ENCODE measurements at regions of chr4 and their contacts with region 1.

Region 1: GRCh38 chr4:1792832-1793495 is at the start of gene FGFR3:
- DNase-seq: peak; percentile 55
- ATAC-seq: peak; percentile 82
- H3K4me3 Mint-ChIP-seq: no peak within 1 kb of the TSS
- H3K27ac Mint-ChIP-seq: no peak within 1 kb of the TSS
- H3K4me1 Mint-ChIP-seq: no peaks in the 10 kb centered on the region
- H3K27me3 Mint-ChIP-seq: peaks cover 10% of the 10 kb centered on the region
- total RNA-seq, gene FGFR3: 0.11 TPM in 1 of 2 experiments, not detected in the other

Region 2: GRCh38 chr4:1207603-1208265 is 585.2 kb before region 1 on chr4:
- CTCF ChIA-PET with region 1: no interaction called
- POLR2A ChIA-PET with region 1: no interaction called
- intact Hi-C with region 1: no loop called
- DNase-seq: peak; percentile 3
- ATAC-seq: no peak
- H3K4me3 Mint-ChIP-seq: no peak overlapping the region
- H3K27ac Mint-ChIP-seq: no peak overlapping the region
- H3K4me1 Mint-ChIP-seq: peaks cover 18% of the 10 kb centered on the region
- H3K27me3 Mint-ChIP-seq: no peaks in the 10 kb centered on the region

Region 3: GRCh38 chr4:1356181-1356998 is 436.6 kb before region 1 on chr4:
- CTCF ChIA-PET with region 1: no interaction called
- POLR2A ChIA-PET with region 1: no interaction called
- intact Hi-C with region 1: no loop called
- DNase-seq: peak; percentile 70
- ATAC-seq: no peak
- H3K4me3 Mint-ChIP-seq: no peak overlapping the region
- H3K27ac Mint-ChIP-seq: no peak overlapping the region
- H3K4me1 Mint-ChIP-seq: peaks cover 7% of the 10 kb centered on the region
- H3K27me3 Mint-ChIP-seq: no peaks in the 10 kb centered on the region

Region 4: DNA sequence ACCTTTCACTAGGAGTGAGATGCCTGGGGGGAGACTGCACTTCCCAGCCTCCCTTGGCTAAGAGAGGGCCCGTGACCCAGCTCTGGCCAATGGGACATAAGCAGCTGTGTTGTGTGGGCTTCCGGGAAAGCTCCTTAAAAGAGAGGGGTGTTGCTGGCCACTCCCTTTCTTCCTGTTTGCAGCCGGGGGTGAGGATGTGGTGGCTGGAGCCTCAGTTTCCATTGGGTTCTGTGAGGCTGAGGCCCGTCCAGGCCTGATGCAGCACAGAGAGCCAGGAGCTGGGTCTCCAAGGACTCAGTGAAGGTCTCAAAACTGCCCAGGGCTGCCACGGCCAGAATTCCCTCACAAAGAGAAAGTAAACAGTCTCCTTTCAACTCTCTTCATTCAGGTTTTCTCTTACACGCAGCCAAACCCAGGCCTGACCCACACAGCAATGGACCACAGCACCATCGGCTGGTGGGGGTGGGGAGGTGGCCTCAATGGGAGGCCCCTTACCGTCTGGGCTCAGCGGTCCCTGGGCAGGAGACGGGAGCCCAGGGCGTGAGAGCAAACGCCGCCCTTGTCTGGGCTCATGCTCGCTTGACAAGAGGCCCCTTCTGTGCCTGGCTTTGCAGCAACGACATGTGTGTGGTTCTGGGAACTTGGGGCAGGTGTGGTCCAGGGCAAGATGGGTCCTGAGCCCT is 393.3 kb before region 1 on chr4:
- CTCF ChIA-PET with region 1: no interaction called
- POLR2A ChIA-PET with region 1: no interaction called
- intact Hi-C with region 1: loop called in 1 of 2 experiments (anchors 5 kb)
- DNase-seq: no peak
- ATAC-seq: no peak
- H3K4me3 Mint-ChIP-seq: no peak overlapping the region
- H3K27ac Mint-ChIP-seq: no peak overlapping the region
- H3K4me1 Mint-ChIP-seq: no peaks in the 10 kb centered on the region
- H3K27me3 Mint-ChIP-seq: peaks cover 13% of the 10 kb centered on the region

Region 5: GRCh38 chr4:1683736-1684505 is 109.0 kb before region 1 on chr4 and contains the start of gene FAM53A:
- CTCF ChIA-PET with region 1: no interaction called
- POLR2A ChIA-PET with region 1: no interaction called
- intact Hi-C with region 1: loop called in 1 of 2 experiments (anchors 1 kb)
- DNase-seq: no peak
- ATAC-seq: peak; percentile 96
- H3K4me3 Mint-ChIP-seq: peak within 1 kb of the TSS; percentile 69
- H3K27ac Mint-ChIP-seq: peak within 1 kb of the TSS; percentile 69
- H3K4me1 Mint-ChIP-seq: peaks cover 12% of the 10 kb centered on the region
- H3K27me3 Mint-ChIP-seq: no peaks in the 10 kb centered on the region
- total RNA-seq, gene FAM53A: 2.0 to 2.5 TPM

Region 6: DNA sequence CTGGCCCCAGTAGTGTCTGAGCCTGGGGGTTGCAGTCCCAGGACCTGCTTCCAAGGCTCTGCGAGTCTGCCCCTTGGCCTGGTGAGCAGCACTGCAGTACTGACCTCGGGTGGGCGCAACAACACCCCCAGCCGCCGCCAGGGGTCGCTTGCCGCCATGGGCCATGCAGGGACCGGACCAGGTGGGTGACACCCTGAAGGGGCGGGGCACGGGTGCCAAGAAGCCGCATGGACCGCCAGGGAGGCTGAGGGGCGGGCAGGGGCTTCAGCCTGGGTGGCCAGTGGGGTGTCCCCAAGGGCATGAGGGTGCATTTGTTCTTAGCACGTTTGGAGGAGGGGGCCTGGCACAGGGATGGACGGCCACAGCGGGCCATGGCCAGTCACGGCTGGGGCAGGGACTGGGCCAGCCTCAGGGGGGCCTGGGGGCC is 46.7 kb before region 1 on chr4:
- CTCF ChIA-PET with region 1: interaction called, 3 read pairs
- POLR2A ChIA-PET with region 1: no interaction called
- intact Hi-C with region 1: loop called in 1 of 2 experiments (anchors 5 kb)
- DNase-seq: peak; percentile 88
- ATAC-seq: peak; percentile 72
- H3K4me3 Mint-ChIP-seq: no peak overlapping the region
- H3K27ac Mint-ChIP-seq: no peak overlapping the region
- H3K4me1 Mint-ChIP-seq: no peaks in the 10 kb centered on the region
- H3K27me3 Mint-ChIP-seq: no peaks in the 10 kb centered on the region

Region 7: DNA sequence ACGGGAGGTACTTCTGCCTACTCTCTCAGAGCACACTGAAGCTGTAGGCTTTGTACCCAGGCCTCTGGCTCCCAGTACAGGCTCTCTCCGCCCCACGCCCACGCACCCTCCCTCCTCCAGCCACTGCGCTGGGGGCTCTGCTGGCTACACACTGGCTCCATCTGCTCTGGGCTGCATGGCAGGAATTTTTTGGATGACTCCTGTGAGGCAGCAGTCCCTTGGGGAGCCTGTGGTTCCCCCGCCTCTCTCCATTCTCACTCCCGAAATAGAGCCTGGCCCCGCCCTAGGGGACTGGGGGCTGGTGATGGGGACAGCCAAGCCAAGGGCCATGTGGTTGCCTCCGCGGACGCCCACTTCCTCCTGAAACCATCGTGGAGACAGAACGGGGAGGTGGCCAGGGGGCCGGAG is 1915.1 kb after region 1 on chr4:
- CTCF ChIA-PET with region 1: no interaction called
- POLR2A ChIA-PET with region 1: no interaction called
- intact Hi-C with region 1: no loop called
- DNase-seq: no peak
- ATAC-seq: no peak
- H3K4me3 Mint-ChIP-seq: no peak overlapping the region
- H3K27ac Mint-ChIP-seq: no peak overlapping the region
- H3K4me1 Mint-ChIP-seq: no peaks in the 10 kb centered on the region
- H3K27me3 Mint-ChIP-seq: peaks cover 5% of the 10 kb centered on the region